Activated CD8-positive, alpha-beta T cell treated with anti-CD3 and anti-CD28 coated beads for 36 hours (primary cell): ENCODE measurements at regions of chr2 and their contacts with region 1.

Region 1: DNA sequence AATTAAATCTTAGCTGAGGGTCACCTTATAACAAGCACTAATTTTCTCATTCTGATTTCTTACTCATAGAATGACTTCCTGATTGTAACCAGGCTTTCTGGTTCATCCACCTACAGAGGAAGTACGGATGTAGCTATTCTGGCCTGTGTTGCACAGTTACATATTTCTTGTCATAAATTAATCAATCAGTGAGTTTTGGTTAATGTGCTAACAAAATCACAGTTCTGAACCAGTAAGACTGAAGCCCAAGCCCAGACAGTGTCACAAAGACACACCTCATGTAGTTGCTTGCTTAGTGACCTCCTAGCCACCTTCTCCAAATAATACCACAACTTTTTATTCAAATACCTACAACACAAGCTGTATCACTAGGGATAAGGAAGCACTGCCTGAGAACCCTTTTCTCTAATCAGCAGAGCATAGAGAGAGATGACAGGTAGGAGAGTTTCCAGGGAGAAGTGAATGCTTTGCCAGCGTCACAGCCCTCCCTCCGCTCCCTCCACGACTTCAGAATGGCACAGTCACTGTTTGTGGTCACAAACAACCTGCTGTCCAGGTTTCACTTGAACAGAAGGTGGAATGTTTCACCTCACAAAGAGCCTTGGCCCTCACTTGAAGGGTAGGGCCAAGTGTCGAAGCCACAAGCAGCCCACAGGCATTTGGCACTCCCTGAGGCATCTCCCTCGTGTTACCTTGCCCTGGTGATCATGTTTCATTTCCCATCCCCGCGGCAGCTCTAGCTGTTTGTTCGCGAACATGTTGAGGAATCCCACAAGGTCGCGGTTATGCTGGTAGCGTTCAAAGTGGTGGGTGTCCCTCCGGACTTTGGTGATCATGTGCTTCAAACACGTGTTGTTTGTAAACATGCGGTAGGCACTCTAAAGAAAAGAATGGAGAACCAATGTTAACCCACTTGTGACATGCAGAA is 120.8 kb upstream of the STK17B start:
- DNase-seq: no peak
- ATAC-seq: peak; percentile 18
- H3K4me3 Mint-ChIP-seq: no peak overlapping the region
- H3K27ac Mint-ChIP-seq: no peak overlapping the region
- H3K4me1 Mint-ChIP-seq: peaks cover 44% of the 10 kb centered on the region
- H3K27me3 Mint-ChIP-seq: no peaks in the 10 kb centered on the region
- CTCF ChIP-seq: no peak

Region 2: GRCh38 chr2:196331143-196331542 is 39.0 kb after region 1 on chr2:
- CTCF ChIA-PET with region 1: no interaction called
- POLR2A ChIA-PET with region 1: no interaction called
- intact Hi-C with region 1: loop called (anchors 5 kb)
- DNase-seq: no peak
- ATAC-seq: no peak
- H3K4me3 Mint-ChIP-seq: no peak overlapping the region
- H3K27ac Mint-ChIP-seq: no peak overlapping the region
- H3K4me1 Mint-ChIP-seq: peaks cover 7% of the 10 kb centered on the region
- H3K27me3 Mint-ChIP-seq: no peaks in the 10 kb centered on the region
- CTCF ChIP-seq: no peak

Region 3: GRCh38 chr2:196459539-196459938 is 167.4 kb after region 1 on chr2:
- CTCF ChIA-PET with region 1: interaction called, 5 read pairs
- POLR2A ChIA-PET with region 1: no interaction called
- intact Hi-C with region 1: loop called (anchors 5 kb)
- DNase-seq: peak; percentile 13
- ATAC-seq: no peak
- H3K4me3 Mint-ChIP-seq: no peak overlapping the region
- H3K27ac Mint-ChIP-seq: no peak overlapping the region
- H3K4me1 Mint-ChIP-seq: peaks cover 12% of the 10 kb centered on the region
- H3K27me3 Mint-ChIP-seq: peaks cover 41% of the 10 kb centered on the region
- CTCF ChIP-seq: no peak

Region 4: GRCh38 chr2:196482119-196483065 is 190.3 kb after region 1 on chr2:
- CTCF ChIA-PET with region 1: no interaction called
- POLR2A ChIA-PET with region 1: no interaction called
- intact Hi-C with region 1: no loop called
- DNase-seq: peak; percentile 20
- ATAC-seq: peak; percentile 84
- H3K4me3 Mint-ChIP-seq: no peak overlapping the region
- H3K27ac Mint-ChIP-seq: no peak overlapping the region
- H3K4me1 Mint-ChIP-seq: no peaks in the 10 kb centered on the region
- H3K27me3 Mint-ChIP-seq: peaks cover 23% of the 10 kb centered on the region
- CTCF ChIP-seq: no peak